ENCODE measurements at regions of chr5 and their contacts with region 1.

Region 1: DNA sequence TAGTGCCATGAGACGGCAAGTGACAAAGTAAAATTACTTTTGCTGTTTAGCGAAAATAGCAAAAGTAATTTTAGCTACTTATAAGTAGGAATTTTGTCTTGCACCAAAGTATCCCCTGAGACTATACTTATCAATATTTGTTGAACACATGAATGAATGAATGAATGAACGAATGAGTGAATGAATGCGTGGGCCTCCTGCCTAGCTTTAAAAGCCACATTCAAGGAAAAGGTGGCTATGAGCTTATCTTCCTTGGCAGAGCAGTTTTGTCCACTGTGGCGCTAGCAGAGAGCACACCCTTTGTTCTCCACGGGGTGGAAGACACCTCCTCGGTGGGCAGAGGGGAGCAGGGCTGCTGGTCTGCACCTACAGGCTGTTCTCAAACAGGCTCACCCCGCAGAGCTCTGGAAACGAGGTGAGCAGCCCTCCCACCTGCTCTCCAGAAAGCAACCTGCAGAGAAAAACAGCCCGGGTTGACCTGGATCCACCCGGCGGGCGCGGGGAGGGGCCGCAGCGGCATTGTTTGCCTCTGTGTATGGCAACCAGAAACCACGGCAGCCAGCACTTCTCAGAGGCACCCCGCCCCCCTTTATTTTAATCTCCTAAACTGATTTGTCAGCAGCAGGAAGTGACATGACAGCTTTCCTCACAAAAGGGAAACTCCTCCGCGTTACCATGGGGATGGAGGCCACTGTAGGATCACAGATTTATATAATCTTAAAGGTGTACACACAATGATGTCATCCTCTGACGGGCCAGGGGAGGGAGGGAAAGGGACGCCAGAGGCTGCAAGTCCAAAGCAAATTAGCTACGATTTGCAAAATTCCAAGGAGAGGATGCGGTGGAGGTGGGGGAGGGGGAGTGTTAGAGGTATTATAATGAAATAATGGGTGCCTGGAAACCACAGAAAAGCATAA is 5.9 kb downstream of the DUSP1 start:
- DNase-seq: peak; percentile 95
- ATAC-seq: peak; percentile 68

Region 2: DNA sequence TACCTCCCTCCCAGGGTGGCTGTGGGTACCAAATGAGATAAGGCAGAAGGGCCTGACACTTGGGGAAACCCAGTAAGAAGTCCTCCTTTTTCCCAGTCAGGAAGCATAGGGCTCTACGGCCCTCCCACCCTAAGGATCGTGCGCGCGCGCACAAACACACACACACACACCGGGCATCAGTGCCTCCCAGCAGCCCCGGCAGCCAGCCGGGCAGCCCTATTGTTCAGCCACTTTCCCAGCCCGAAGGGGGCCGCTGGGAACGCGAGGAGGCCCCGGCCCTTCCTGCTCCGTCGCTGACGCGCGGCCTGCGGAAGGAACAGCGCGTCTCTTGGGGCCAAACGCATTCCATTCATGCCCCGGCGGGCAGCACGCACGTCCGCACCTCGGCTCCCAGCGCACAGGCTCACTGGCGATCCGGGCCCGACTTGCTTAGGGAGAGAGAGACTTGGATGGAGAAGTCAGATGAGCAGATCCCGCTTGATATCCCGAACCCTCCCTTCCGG is 16.7 kb before region 1 on chr5:
- intact Hi-C with region 1: loop called (anchors 2 kb)
- DNase-seq: peak; percentile 93
- ATAC-seq: peak; percentile 84

Region 3: DNA sequence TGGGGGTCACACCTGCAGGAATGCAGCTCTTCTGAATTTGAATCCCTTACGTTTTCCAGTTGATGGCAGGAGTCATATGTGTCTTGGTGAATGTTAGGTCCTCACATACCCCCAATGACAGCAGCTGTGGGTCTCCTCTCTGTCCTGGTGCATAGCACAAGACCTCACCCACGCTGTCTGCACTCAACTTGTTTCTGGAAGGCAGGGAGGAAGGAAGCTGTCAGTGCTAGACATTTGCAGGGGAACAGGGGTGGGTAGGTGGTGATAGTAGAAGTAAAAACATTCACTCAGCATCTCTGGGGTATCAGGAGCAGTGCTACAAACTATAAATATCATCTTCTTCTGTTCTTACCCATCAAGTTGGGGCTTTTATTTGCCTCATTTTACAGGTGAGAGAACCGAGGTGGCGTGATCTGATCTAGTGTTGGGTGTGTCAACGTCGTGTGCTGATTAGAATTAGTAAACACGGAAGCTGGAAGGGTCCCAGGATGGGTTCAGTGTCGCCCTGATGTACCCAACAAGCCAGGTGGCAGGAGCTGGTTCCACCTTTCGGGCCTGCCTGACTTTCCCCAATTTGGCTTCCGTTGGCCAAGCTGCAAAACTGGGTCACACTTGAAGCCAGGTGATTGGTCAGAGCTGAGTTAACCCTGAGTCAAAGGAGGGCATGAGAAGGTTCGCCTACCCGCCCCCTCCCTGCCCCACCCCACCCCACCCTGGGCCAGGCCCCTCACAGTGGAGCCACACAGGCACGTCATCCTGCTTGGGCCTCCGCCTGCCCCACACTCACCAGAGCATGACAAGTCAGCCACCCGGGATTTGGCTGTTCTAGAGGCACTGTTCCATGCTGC is 84.7 kb after region 1 on chr5:
- intact Hi-C with region 1: no loop called
- DNase-seq: no peak
- ATAC-seq: no peak

Region 4: GRCh38 chr5:172870291-172870714 is 105.2 kb after region 1 on chr5:
- intact Hi-C with region 1: loop called (anchors 5 kb)
- DNase-seq: peak; percentile 56
- ATAC-seq: peak; percentile 5